ENCODE measurements at regions of chr1 and their contacts with region 1.

Region 1: DNA sequence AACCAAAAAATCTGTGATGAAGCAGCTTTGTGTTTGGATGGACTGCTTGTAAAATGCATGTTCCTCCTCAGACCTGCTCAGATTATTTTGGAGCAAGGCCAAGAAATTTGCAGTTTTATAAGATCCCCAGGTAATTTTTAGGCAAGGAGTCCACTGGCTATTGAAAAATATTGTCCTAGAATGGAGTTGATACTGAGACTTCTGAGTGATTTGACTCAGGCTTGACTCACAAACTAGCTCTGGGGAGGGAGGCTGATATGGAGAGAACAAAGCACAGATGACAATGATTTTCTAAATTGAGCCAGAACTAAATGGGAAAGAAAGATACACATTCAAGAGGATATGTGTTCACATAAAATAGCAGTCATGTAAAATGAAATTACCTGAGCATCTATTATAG is 36.7 kb downstream of the AGL start:
- DNase-seq: no peak

Region 2: GRCh38 chr1:100147875-100148274 is 261.0 kb after region 1 on chr1:
- intact Hi-C with region 1: loop called in 1 of 2 experiments (anchors 10 kb)
- DNase-seq: no peak